ENCODE measurements at regions of chr10 and their contacts with region 1.

Region 1: DNA sequence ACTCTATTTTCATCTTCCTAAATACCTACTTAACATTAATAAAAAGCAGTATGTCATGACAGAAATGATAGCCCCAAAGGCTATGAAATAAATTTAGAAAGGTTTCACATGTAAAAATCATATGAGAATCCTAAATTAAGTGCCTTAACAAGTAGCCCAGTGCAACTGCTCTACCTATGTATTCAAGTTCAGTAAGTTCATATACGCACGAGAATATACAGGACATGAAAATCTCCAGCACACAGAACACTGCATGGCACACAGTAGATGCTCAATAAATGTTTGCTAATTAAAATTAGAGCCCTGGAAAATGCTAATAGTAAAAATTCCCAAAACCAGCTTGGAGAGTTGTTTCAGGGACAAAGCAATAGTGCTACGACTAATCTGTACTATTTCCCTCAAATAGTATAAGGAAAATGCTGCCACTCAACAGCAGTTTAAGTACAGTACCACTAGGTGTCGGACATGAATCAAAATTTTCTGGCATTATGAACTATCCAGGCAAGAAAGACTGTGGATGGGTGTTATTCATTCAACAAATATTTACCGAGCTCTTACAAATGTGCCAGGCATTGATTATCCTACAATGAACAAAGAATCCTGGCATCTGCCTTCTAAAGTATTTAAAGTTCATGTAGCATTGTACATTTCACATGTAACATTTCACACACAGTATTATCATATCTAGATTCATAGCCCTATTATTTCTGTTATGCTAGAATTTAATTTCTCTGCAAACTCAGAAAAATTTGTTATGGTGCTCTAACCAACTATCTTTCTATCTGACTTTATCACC is 80.9 kb downstream of the ARHGAP21 start:
- DNase-seq: peak; percentile 12
- H3K4me3 Mint-ChIP-seq: no peak overlapping the region
- H3K27ac Mint-ChIP-seq: no peak overlapping the region
- H3K4me1 Mint-ChIP-seq: no peaks in the 10 kb centered on the region
- H3K27me3 Mint-ChIP-seq: no peaks in the 10 kb centered on the region

Region 2: DNA sequence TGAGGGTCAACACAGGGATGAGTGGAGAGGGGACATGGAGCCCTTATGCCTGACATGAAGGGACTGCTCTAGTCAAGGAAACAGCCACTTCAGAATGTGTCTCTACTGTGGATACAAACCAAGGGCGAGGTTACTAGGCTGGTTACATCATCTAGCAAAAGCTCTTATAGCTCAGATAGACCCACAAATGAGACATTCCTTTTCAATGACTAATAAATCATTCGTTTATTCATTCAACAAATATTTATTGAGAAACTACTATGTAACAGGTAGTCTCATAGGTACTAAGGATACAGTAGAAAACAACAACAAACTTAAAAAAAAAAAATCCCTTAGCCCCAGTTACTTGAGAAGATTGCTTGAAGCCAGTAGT is 214.4 kb before region 1 on chr10:
- CTCF ChIA-PET with region 1: no interaction called
- intact Hi-C with region 1: no loop called
- DNase-seq: no peak
- H3K4me3 Mint-ChIP-seq: no peak overlapping the region
- H3K27ac Mint-ChIP-seq: no peak overlapping the region
- H3K4me1 Mint-ChIP-seq: no peaks in the 10 kb centered on the region
- H3K27me3 Mint-ChIP-seq: peaks cover 6% of the 10 kb centered on the region

Region 3: DNA sequence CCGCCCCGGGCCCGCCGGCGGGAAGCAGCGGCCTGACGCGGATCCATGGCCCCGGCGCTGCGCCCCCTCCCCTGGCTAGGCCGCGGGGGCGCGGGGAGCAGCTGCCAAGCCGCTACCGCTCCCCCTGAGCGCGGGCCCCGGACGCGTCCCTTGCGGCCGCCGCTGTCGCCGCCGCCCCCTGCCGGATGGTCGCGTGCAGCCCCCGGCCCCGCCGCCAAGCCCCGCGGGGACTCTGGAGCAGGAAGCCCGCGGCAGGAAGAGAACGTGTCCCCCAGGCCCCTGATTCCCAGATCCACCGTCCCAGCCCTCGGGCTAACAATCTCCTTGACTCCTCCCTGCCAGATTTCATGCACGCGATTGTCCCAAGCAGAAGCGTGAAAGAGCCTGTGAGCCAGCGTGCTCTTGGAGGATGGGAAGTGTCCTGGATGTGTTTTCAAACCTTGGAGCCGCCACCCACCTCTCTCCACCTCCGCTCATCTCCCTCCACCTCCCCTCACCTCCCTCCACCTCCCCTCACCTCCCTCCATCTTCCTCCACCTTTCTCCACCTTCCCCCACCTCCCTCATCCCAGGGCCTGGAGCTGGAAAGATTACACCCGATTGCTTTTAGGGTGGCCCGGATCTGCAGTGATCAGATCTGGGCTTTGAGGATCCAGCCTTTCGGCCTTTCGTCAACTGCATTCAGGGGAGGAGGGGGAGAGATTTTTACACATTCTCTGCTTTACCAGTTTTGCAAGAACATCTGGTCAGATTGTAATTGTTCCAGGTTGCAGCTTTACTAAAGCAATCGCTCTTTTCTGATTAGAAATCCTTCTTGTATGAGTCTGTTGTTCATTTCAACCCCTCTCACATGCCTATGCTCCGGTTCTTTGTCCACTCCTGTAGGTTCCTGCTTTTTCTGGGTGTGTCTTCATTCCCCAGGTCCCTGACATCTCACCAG is 310.2 kb after region 1 on chr10:
- CTCF ChIA-PET with region 1: no interaction called
- intact Hi-C with region 1: loop called (anchors 1 kb)
- DNase-seq: peak; percentile 39
- H3K4me3 Mint-ChIP-seq: peak overlapping the region; percentile 72
- H3K27ac Mint-ChIP-seq: no peak overlapping the region
- H3K4me1 Mint-ChIP-seq: peaks cover 14% of the 10 kb centered on the region
- H3K27me3 Mint-ChIP-seq: no peaks in the 10 kb centered on the region

Region 4: GRCh38 chr10:24989867-24990266 is 347.0 kb after region 1 on chr10:
- CTCF ChIA-PET with region 1: interaction called, 5 read pairs
- intact Hi-C with region 1: loop called (anchors 1 kb)
- DNase-seq: no peak
- H3K4me3 Mint-ChIP-seq: no peak overlapping the region
- H3K27ac Mint-ChIP-seq: no peak overlapping the region
- H3K4me1 Mint-ChIP-seq: no peaks in the 10 kb centered on the region
- H3K27me3 Mint-ChIP-seq: peaks cover 3% of the 10 kb centered on the region

Region 5: DNA sequence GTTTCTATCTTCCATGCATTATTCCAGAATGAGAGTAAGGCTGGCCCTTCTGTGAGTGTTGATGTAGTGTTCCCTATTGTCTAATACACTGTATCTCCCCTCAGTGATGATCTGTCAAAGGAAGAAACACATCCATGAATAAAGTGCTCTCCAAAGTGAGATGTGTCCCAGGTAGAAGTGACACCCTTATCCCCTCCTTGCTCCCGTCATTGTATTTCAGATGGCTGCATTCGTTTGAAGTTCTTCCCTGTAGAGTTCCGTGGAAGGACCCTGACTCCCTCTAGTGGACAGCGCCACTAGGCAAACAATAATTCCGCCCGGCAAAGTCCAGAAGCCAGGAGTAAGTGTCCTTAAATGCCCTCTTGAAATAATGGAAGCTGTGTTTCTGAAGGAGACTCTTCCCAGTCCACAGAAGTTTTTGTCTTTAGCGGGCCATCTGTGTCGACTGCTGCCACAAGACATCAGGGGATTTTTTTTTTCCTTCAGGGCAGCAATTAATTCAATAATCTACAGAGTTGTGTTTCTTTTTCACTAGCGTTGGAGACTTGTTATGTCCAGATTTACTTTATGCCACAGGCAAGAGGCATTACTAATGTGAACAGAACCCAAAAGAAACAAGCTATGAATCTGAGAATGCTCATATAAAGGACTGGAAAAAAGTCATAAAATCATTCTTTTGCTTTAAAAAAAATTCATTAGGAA is 438.2 kb after region 1 on chr10:
- CTCF ChIA-PET with region 1: interaction called, 12 read pairs
- intact Hi-C with region 1: loop called (anchors 1 kb)
- DNase-seq: peak; percentile 77
- H3K4me3 Mint-ChIP-seq: no peak overlapping the region
- H3K27ac Mint-ChIP-seq: no peak overlapping the region
- H3K4me1 Mint-ChIP-seq: peaks cover 3% of the 10 kb centered on the region
- H3K27me3 Mint-ChIP-seq: peaks cover 8% of the 10 kb centered on the region

Region 6: GRCh38 chr10:25226775-25227682 is 584.2 kb after region 1 on chr10:
- CTCF ChIA-PET with region 1: no interaction called
- intact Hi-C with region 1: loop called (anchors 5 kb)
- DNase-seq: peak; percentile 35
- H3K4me3 Mint-ChIP-seq: no peak overlapping the region
- H3K27ac Mint-ChIP-seq: no peak overlapping the region
- H3K4me1 Mint-ChIP-seq: no peaks in the 10 kb centered on the region
- H3K27me3 Mint-ChIP-seq: no peaks in the 10 kb centered on the region